ENCODE measurements at regions of chr19 and their contacts with region 1.

Region 1: GRCh38 chr19:43446746-43447489 is 18.5 kb downstream of the LYPD3 start:
- DNase-seq: peak; percentile 82
- H3K4me3 ChIP-seq: peak overlapping the region in 1 of 2 experiments; percentile 24; a peak in 1 of 4 replicates
- H3K27ac ChIP-seq: no peak overlapping the region
- H3K4me1 ChIP-seq: no peaks in the 10 kb centered on the region
- H3K27me3 ChIP-seq: peaks cover 12% of the 10 kb centered on the region; the same call in 1 of the 2 replicates
- CTCF ChIP-seq: peak; percentile 93
- EP300 ChIP-seq: no peak
- RAD21 ChIP-seq: peak; percentile 94

Region 2: GRCh38 chr19:43101950-43102349 is 345.0 kb before region 1 on chr19:
- CTCF ChIA-PET with region 1: no interaction called
- POLR2A ChIA-PET with region 1: no interaction called
- DNase-seq: no peak
- H3K4me3 ChIP-seq: no peak overlapping the region
- H3K27ac ChIP-seq: no peak overlapping the region
- H3K4me1 ChIP-seq: no peaks in the 10 kb centered on the region
- H3K27me3 ChIP-seq: no peaks in the 10 kb centered on the region
- CTCF ChIP-seq: no peak
- EP300 ChIP-seq: no peak
- RAD21 ChIP-seq: no peak

Region 3: DNA sequence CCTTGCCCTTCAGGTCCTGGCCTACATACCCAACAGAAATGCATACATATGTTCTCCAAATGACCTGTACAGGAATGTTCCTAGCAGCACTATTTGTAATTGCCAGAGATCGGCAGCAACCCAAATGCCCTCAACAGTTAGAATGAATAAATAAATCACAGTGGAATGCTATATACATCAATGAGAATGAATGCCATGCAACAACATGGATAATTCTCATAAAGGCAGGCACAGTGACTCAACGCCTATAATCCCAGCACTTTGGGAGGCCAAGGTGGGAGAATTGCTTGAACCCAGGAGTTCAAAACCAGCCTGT is 13.6 kb before region 1 on chr19:
- CTCF ChIA-PET with region 1: interaction called, 47 read pairs
- POLR2A ChIA-PET with region 1: no interaction called
- DNase-seq: no peak
- H3K4me3 ChIP-seq: no peak overlapping the region
- H3K27ac ChIP-seq: no peak overlapping the region
- H3K4me1 ChIP-seq: peaks cover 0 to 2% of the 10 kb centered on the region in 2 experiments; a peak in 1 of 4 replicates
- H3K27me3 ChIP-seq: peaks cover 17% of the 10 kb centered on the region; the same call in 1 of the 2 replicates
- CTCF ChIP-seq: no peak
- EP300 ChIP-seq: no peak
- RAD21 ChIP-seq: no peak

Region 4: GRCh38 chr19:43463381-43464136 is 16.6 kb after region 1 on chr19:
- CTCF ChIA-PET with region 1: interaction called, 30 read pairs
- POLR2A ChIA-PET with region 1: no interaction called
- DNase-seq: peak; percentile 98
- H3K4me3 ChIP-seq: peak overlapping the region; percentile 65 to 88
- H3K27ac ChIP-seq: peak overlapping the region; percentile 61 to 67; a peak in 3 of 4 replicates
- H3K4me1 ChIP-seq: peaks cover 0 to 10% of the 10 kb centered on the region in 2 experiments; a peak in 1 of 4 replicates
- H3K27me3 ChIP-seq: no peaks in the 10 kb centered on the region
- CTCF ChIP-seq: no peak
- EP300 ChIP-seq: no peak
- RAD21 ChIP-seq: no peak

Region 5: DNA sequence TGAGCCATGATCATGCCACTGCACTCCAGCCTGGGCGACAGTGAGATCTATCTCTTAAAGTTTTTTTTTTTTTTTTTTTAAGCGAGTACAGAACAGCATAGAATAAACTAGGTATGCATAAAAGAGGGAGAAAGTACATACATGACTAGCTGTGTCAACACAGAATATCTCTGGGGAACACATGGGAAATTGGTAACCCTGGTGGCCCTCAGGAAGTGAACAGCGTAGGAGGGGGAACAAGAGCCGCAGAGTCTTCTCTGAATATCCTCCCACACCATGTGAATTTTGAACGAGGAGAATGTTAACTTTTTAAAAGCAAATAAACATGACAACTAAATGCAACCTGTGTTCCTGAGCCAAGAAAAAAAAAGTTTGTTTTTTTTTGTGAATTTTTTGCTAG is 42.4 kb after region 1 on chr19:
- CTCF ChIA-PET with region 1: interaction called, 13 read pairs
- POLR2A ChIA-PET with region 1: no interaction called
- DNase-seq: no peak
- H3K4me3 ChIP-seq: no peak overlapping the region
- H3K27ac ChIP-seq: no peak overlapping the region
- H3K4me1 ChIP-seq: no peaks in the 10 kb centered on the region
- H3K27me3 ChIP-seq: no peaks in the 10 kb centered on the region
- CTCF ChIP-seq: no peak
- EP300 ChIP-seq: no peak
- RAD21 ChIP-seq: no peak

Region 6: DNA sequence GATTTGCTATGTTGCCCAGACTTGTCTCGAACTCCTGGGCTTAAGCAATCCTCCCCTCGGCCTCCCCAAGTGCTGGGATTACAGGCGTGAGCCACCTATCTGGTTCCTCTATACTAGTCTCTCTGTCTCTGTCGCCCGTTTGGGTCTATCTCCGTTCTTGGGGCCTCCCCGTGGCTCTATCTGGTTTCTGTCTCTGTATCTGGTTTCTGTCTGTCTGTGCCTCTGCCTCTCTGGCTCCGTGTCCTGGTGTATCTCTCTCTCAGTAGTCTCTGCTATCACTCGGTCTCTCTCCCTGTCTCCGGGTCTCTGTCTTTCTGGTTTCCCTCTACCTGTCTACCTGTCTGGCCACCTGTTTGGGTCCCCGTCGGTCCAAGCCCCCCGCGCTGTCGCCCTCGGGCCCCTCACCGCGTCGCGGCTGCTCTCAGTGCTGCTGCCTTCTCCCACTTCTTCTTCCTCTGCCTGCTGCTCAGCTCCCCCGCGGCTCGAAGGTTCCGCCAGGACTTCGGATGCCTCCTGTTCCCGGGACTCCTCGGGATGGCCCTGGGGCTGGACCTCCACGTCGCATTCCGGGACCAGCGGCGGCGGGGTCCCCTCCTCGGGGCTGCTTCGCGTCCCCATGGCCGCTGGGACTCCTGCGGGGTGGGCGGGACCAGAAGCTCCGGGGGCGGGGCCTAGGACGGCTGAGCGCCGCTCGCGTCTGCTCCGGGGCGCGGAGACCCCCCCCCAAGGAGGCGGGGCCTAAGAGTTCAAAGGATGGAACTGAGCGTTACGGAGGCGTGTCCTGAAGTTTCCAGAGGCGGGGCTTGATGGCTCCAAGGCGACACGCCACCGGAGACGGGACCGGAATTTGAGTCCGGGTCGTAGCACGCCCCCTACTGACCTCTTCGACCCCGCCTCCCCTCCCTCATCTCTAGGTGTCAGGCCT is 56.8 kb after region 1 on chr19:
- CTCF ChIA-PET with region 1: interaction called, 22 read pairs
- POLR2A ChIA-PET with region 1: no interaction called
- DNase-seq: peak; percentile 99
- H3K4me3 ChIP-seq: peak overlapping the region; percentile 64 to 98
- H3K27ac ChIP-seq: peak overlapping the region; percentile 68
- H3K4me1 ChIP-seq: peaks cover 3 to 4% of the 10 kb centered on the region in 2 experiments; a peak in 1 of 4 replicates
- H3K27me3 ChIP-seq: no peaks in the 10 kb centered on the region
- CTCF ChIP-seq: no peak
- EP300 ChIP-seq: no peak; a peak in 1 of 4 replicates
- RAD21 ChIP-seq: peak; percentile 37

Region 7: GRCh38 chr19:43595999-43596841 is 149.3 kb after region 1 on chr19 and contains the starts of genes IRGQ and ZNF576:
- CTCF ChIA-PET with region 1: interaction called, 15 read pairs
- POLR2A ChIA-PET with region 1: no interaction called
- DNase-seq: peak; percentile 97
- H3K4me3 ChIP-seq: peak within 1 kb of the TSS; percentile 72 to 98
- H3K27ac ChIP-seq: peak within 1 kb of the TSS; percentile 93 to 98
- H3K4me1 ChIP-seq: peaks cover 8 to 22% of the 10 kb centered on the region in 2 experiments; a peak in 2 of 4 replicates
- H3K27me3 ChIP-seq: no peaks in the 10 kb centered on the region
- CTCF ChIP-seq: no peak
- EP300 ChIP-seq: no peak; a peak in 1 of 4 replicates
- RAD21 ChIP-seq: no peak
- polyA plus RNA-seq, gene IRGQ: 8.4 and 10.8 TPM in 2 replicates
- polyA plus RNA-seq, gene ZNF576: 12.8 and 13.6 TPM in 2 replicates

Measured in SK-N-SH (cell line).